ENCODE measurements at regions of chr18 and their contacts with region 1.

Region 1: DNA sequence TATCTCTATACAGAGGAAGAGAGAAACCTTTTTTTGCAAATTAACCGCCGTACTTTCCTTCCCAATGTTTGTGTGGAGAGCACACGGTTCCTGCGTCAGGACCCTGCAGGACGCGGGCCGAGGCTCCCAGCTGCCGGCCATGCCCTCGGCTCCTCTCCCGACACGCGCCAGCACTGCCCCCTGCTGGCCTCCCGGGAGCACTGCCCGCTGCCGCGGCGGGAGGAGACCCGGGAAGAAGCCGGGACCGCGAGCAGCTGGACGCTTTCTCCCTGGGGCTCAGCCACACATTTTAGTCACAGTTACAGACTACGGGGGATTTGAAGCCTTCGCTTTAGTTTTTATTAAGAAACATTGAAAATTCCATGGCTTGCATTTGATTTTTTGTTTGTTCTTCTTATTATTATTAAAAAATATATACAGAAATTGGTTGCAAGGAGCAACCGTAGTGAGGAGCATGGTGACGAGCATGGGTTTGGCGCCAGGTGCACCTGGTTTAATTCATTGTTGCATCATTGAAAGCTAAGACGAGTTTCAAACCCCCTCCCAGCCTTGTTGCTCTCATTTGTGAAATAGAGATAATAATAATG is 401.2 kb downstream of the GALR1 start:
- DNase-seq: peak; percentile 41
- H3K4me3 Mint-ChIP-seq: no peak overlapping the region
- H3K27ac Mint-ChIP-seq: no peak overlapping the region
- H3K4me1 Mint-ChIP-seq: peaks cover 4% of the 10 kb centered on the region
- H3K27me3 Mint-ChIP-seq: peaks cover 9% of the 10 kb centered on the region

Region 2: DNA sequence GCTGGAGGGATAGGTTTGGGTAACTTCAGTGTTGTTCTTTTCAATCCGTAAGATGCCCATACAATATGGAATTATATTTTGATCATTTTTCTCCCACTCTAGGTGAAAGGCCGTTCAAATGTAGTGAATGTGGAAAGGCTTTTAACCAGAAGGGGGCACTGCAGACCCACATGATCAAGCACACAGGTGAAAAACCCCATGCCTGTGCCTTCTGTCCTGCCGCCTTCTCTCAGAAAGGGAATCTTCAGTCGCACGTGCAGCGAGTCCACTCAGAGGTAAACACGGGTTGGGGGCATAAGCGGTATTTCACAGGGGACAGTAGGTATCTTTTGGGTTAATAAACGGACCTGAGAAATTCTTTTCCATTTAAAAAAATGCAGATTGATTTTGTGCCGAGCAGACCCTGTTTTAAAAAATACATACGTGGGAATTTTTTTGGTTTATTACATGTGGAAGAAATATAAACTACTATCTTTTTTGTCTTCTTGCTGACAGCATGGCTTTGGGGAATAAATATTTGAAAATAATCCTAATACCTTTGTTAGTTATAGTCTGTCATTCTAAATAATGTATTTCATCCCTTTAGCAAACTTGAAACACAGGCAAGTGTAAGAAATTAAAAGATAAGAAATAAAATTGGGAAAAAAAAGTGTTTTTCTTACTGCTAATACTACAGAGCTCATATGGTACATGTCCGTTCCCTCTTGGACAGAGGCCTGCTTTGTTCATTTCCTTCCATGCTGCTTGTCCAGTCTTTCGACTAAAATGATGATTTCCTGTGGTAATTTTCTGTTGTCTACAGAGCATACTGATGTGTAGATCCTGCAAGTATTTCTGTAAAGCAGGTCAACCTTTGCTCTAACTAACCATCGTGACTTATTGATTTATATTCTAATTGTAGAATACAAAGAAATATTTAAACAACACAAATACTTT is 775.2 kb before region 1 on chr18:
- intact Hi-C with region 1: loop called (anchors 2 kb)
- DNase-seq: peak; percentile 14
- H3K4me3 Mint-ChIP-seq: no peak overlapping the region
- H3K27ac Mint-ChIP-seq: peak overlapping the region; percentile 59
- H3K4me1 Mint-ChIP-seq: peaks cover 17% of the 10 kb centered on the region
- H3K27me3 Mint-ChIP-seq: no peaks in the 10 kb centered on the region